ENCODE measurements at regions of chr13 and their contacts with region 1.

Region 1: GRCh38 chr13:25375727-25376358 is 4.1 kb downstream of the ATP8A2 start:
- DNase-seq: no peak
- H3K4me3 ChIP-seq: no peak overlapping the region
- H3K27ac ChIP-seq: no peak overlapping the region
- H3K4me1 ChIP-seq: peaks cover 4 to 17% (median 9%) of the 10 kb centered on the region in 6 donors
- H3K27me3 ChIP-seq: peaks cover 5 to 54% (median 43%) of the 10 kb centered on the region in 7 donors
- CTCF ChIP-seq: peak; percentile 14 to 65 (median 59)
- POLR2A ChIP-seq: no peak

Region 2: DNA sequence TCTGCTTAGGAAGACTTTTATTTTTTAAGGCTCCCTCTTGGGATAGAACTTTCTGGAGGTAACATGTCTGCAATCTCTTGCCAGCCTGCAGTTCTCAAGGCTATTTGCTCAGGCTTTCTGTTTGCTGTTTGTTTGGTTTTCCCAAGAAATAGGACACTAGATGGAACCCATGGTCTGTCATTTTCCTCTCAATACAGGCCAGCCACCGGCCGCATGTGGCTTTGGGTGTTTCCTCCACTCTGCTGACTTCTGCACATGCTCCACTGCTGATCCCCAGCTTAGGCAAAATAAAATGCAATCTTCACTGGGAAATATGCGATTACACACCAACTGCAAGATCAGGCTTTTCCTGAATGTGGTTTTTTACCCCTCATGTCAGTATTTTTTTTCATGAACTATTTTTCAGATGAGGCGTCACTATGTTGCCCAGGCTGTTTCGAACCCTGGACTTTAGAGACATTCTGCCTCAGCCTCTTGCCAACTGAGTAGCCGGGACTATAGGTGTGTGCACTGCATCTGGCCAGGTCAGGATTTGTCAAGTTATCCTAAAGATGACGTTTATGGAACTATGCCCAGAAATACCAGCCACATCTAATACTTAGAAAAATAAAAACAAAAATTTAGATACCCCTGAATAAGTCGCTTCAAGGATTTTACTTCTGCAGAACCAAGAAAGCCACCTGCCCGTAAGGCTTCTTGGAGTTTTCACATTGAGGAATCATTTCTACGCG is 374.2 kb before region 1 on chr13:
- intact Hi-C with region 1: loop called (anchors 10 kb)
- DNase-seq: no peak
- H3K4me3 ChIP-seq: no peak overlapping the region
- H3K27ac ChIP-seq: no peak overlapping the region
- H3K4me1 ChIP-seq: no peaks in the 10 kb centered on the region
- H3K27me3 ChIP-seq: peaks cover 0 to 56% (median 3%) of the 10 kb centered on the region in 7 donors
- CTCF ChIP-seq: no peak
- POLR2A ChIP-seq: no peak

Region 3: DNA sequence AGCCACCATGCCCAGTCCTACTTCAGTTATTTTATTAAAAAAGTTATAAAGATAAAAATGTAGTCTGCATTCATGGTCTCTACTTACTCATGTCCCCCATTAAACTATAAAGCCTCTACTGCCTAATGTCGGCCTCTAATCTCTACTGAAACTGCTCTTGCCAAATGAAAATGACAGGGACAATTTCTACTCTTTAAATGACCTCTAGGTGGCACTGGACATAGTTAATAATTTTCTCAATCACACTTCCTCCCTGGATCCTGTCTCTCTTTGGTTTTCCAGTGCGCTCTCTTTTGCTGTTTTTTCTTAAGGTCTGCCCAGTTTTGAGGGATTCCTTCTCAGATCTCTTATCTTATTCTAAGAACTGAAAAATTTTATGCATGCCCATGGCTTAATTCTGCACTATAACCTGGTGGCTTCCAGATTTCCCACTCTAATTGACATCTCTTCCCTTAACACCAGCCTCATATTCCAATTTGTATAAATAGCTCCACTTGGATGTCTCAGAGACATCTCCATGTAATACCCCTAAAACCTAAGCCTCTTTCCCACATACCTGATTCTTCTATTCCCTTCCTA is 142.8 kb before region 1 on chr13:
- intact Hi-C with region 1: loop called (anchors 10 kb)
- DNase-seq: no peak
- H3K4me3 ChIP-seq: no peak overlapping the region
- H3K27ac ChIP-seq: no peak overlapping the region
- H3K4me1 ChIP-seq: peaks cover 0 to 13% (median 0%) of the 10 kb centered on the region in 6 donors
- H3K27me3 ChIP-seq: peaks cover 0 to 16% (median 0%) of the 10 kb centered on the region in 7 donors
- CTCF ChIP-seq: peak in 10 of 11 experiments; percentile 16 to 69 (median 55)
- POLR2A ChIP-seq: no peak

Region 4: DNA sequence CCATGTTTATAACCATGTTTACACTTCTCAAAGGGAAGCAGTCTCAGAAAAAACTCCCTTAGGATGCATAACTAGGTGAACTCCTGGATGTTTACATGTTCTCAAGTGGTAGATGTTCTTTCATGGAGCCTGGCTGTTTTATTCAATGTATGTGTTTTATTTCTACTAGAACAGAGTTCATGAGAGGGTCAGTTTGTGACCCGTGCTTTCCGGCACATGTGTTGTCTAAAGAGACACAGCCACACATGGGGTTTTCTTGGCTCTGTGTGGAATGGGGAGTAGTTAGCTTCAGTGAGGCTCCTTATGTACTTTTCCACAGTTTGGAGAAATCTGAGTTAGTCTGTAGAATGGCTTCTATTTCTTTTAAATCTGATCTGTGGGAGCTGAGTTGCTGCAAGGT is 56.8 kb after region 1 on chr13:
- intact Hi-C with region 1: no loop called
- DNase-seq: no peak
- H3K4me3 ChIP-seq: no peak overlapping the region
- H3K27ac ChIP-seq: no peak overlapping the region
- H3K4me1 ChIP-seq: no peaks in the 10 kb centered on the region
- H3K27me3 ChIP-seq: peaks cover 0 to 1% (median 0%) of the 10 kb centered on the region in 7 donors
- CTCF ChIP-seq: no peak
- POLR2A ChIP-seq: no peak

Region 5: DNA sequence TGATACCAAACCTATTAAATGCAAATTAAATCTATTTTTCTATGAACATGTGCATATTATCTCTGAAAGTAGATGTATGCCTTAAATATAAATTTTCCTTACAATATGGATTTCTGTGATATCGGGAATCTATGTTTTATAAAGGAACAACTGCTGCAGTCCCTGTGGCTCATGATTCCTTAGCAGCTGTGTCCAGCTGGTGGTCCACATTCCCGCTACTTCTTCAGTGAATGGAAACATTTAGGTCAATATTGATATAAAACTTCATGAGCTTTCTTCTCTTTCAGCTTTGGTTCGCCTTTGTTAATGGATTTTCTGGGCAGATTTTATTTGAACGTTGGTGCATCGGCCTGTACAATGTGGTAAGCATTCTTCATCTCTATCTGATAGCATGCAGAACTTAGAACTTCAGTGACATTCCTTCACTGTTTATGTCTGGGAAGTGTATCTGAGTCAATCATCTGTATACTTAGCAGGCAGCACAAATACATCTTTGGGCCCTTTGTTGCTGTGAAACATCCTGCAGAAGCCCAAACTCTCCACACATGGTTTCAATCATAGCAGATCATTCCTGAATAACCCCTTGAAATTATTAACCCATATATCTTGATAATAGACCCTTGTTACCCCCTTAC is 452.1 kb after region 1 on chr13:
- intact Hi-C with region 1: no loop called
- DNase-seq: no peak
- H3K4me3 ChIP-seq: no peak overlapping the region
- H3K27ac ChIP-seq: no peak overlapping the region
- H3K4me1 ChIP-seq: no peaks in the 10 kb centered on the region
- H3K27me3 ChIP-seq: no peaks in the 10 kb centered on the region
- CTCF ChIP-seq: no peak
- POLR2A ChIP-seq: no peak

Region 6: GRCh38 chr13:25958986-25959385 is 583.1 kb after region 1 on chr13:
- intact Hi-C with region 1: no loop called
- DNase-seq: no peak
- H3K4me3 ChIP-seq: no peak overlapping the region
- H3K27ac ChIP-seq: no peak overlapping the region
- H3K4me1 ChIP-seq: no peaks in the 10 kb centered on the region
- H3K27me3 ChIP-seq: peaks cover 0 to 6% (median 0%) of the 10 kb centered on the region in 7 donors
- CTCF ChIP-seq: no peak
- POLR2A ChIP-seq: no peak